ENCODE measurements at regions of chr1 and their contacts with region 1.

Region 1: GRCh38 chr1:92367496-92367895 is 68.6 kb downstream of the RPAP2 start:
- DNase-seq: peak; percentile 51
- ATAC-seq: peak; percentile 49
- H3K4me3 Mint-ChIP-seq: peak overlapping the region; percentile 33
- H3K27ac Mint-ChIP-seq: peak overlapping the region; percentile 91
- H3K4me1 Mint-ChIP-seq: peaks cover 57% of the 10 kb centered on the region
- H3K27me3 Mint-ChIP-seq: no peaks in the 10 kb centered on the region

Region 2: GRCh38 chr1:92317836-92318493 is 49.5 kb before region 1 on chr1:
- CTCF ChIA-PET with region 1: interaction called, 15 read pairs
- DNase-seq: peak; percentile 60
- ATAC-seq: peak; percentile 72
- H3K4me3 Mint-ChIP-seq: peak overlapping the region; percentile 55
- H3K27ac Mint-ChIP-seq: peak overlapping the region; percentile 84
- H3K4me1 Mint-ChIP-seq: peaks cover 69% of the 10 kb centered on the region
- H3K27me3 Mint-ChIP-seq: no peaks in the 10 kb centered on the region

Region 3: GRCh38 chr1:92323473-92324453 is 43.7 kb before region 1 on chr1:
- CTCF ChIA-PET with region 1: interaction called, 14 read pairs
- DNase-seq: no peak
- ATAC-seq: peak; percentile 79
- H3K4me3 Mint-ChIP-seq: peak overlapping the region; percentile 72
- H3K27ac Mint-ChIP-seq: peak overlapping the region; percentile 95
- H3K4me1 Mint-ChIP-seq: peaks cover 41% of the 10 kb centered on the region
- H3K27me3 Mint-ChIP-seq: no peaks in the 10 kb centered on the region

Region 4: GRCh38 chr1:92623187-92623778 is 255.8 kb after region 1 on chr1:
- CTCF ChIA-PET with region 1: no interaction called
- DNase-seq: no peak
- ATAC-seq: peak; percentile 36
- H3K4me3 Mint-ChIP-seq: no peak overlapping the region
- H3K27ac Mint-ChIP-seq: no peak overlapping the region
- H3K4me1 Mint-ChIP-seq: peaks cover 2% of the 10 kb centered on the region
- H3K27me3 Mint-ChIP-seq: peaks cover 2% of the 10 kb centered on the region

Measured in activated CD8-positive, alpha-beta memory T cell treated with anti-CD3 and anti-CD28 coated beads, Interleukin-2, amount 10 ng/mL, durations not matched to agents 7 days and 5 days (primary cell).